MCF 10A (cell line): ENCODE measurements at regions of chr10 and their contacts with region 1.

Region 1: GRCh38 chr10:28241741-28242399 is 61.0 kb downstream of the MPP7 start:
- DNase-seq: peak; percentile 64
- H3K4me3 Mint-ChIP-seq: no peak overlapping the region
- H3K27ac Mint-ChIP-seq: no peak overlapping the region
- H3K4me1 Mint-ChIP-seq: peaks cover 5% of the 10 kb centered on the region
- H3K27me3 Mint-ChIP-seq: no peaks in the 10 kb centered on the region
- CTCF ChIP-seq: peak; percentile 75

Region 2: GRCh38 chr10:27369880-27370279 is 872.0 kb before region 1 on chr10:
- CTCF ChIA-PET with region 1: interaction called, 6 read pairs
- POLR2A ChIA-PET with region 1: no interaction called
- intact Hi-C with region 1: loop called (anchors 2 kb)
- DNase-seq: peak; percentile 24
- H3K4me3 Mint-ChIP-seq: no peak overlapping the region
- H3K27ac Mint-ChIP-seq: no peak overlapping the region
- H3K4me1 Mint-ChIP-seq: peaks cover 22% of the 10 kb centered on the region
- H3K27me3 Mint-ChIP-seq: no peaks in the 10 kb centered on the region
- CTCF ChIP-seq: peak; percentile 40

Region 3: DNA sequence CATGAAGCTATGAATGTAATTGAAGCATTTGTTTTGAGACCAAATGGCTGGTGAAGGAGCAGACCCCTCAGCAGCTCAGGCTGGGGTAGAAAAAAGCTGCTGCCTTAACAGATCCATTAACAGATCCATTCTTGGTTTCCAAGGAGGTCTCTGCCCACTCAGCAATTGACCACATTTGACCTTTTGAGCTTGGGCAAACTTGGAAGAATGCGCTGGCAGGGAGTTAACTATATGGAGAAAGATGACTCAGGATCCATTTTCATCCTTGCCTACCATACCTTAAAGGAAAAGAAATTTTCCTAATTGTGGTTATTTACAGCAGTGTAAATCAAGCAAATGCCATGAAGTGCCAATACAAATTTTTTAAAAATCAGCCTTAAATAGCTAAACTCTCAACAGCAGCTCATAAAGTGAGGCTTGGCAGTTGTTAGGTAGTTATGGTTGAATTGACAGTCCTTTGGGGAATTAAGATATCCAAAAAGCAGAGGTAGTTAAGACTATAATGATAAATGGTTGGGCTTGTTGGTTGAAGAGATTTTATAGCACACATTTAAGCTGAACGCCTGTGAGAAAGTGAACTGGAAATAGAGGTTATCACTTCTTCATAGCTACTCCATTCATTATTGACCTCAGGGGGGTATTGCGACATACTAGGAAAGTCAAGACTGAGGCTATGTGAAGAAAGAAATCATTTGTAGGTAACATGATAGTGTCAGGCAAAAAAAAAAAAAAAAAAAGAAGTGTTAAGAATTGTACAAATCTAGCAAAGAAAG is 580.2 kb before region 1 on chr10:
- CTCF ChIA-PET with region 1: interaction called, 4 read pairs
- POLR2A ChIA-PET with region 1: no interaction called
- intact Hi-C with region 1: loop called (anchors 5 kb)
- DNase-seq: peak; percentile 16
- H3K4me3 Mint-ChIP-seq: no peak overlapping the region
- H3K27ac Mint-ChIP-seq: no peak overlapping the region
- H3K4me1 Mint-ChIP-seq: peaks cover 14% of the 10 kb centered on the region
- H3K27me3 Mint-ChIP-seq: no peaks in the 10 kb centered on the region
- CTCF ChIP-seq: no peak

Region 4: GRCh38 chr10:27759483-27760272 is 482.2 kb before region 1 on chr10:
- CTCF ChIA-PET with region 1: interaction called, 3 read pairs
- POLR2A ChIA-PET with region 1: no interaction called
- intact Hi-C with region 1: loop called (anchors 5 kb)
- DNase-seq: peak; percentile 9
- H3K4me3 Mint-ChIP-seq: no peak overlapping the region
- H3K27ac Mint-ChIP-seq: no peak overlapping the region
- H3K4me1 Mint-ChIP-seq: no peaks in the 10 kb centered on the region
- H3K27me3 Mint-ChIP-seq: no peaks in the 10 kb centered on the region
- CTCF ChIP-seq: peak; percentile 18

Region 5: GRCh38 chr10:27783660-27784059 is 458.2 kb before region 1 on chr10:
- CTCF ChIA-PET with region 1: no interaction called
- POLR2A ChIA-PET with region 1: no interaction called
- intact Hi-C with region 1: loop called (anchors 2 kb)
- DNase-seq: peak; percentile 64
- H3K4me3 Mint-ChIP-seq: no peak overlapping the region
- H3K27ac Mint-ChIP-seq: no peak overlapping the region
- H3K4me1 Mint-ChIP-seq: no peaks in the 10 kb centered on the region
- H3K27me3 Mint-ChIP-seq: no peaks in the 10 kb centered on the region
- CTCF ChIP-seq: peak; percentile 29

Region 6: GRCh38 chr10:27865221-27865638 is 376.6 kb before region 1 on chr10:
- CTCF ChIA-PET with region 1: interaction called, 3 read pairs
- POLR2A ChIA-PET with region 1: no interaction called
- intact Hi-C with region 1: loop called (anchors 1 kb)
- DNase-seq: peak; percentile 44
- H3K4me3 Mint-ChIP-seq: no peak overlapping the region
- H3K27ac Mint-ChIP-seq: peak overlapping the region; percentile 40
- H3K4me1 Mint-ChIP-seq: peaks cover 15% of the 10 kb centered on the region
- H3K27me3 Mint-ChIP-seq: no peaks in the 10 kb centered on the region
- CTCF ChIP-seq: no peak

Region 7: DNA sequence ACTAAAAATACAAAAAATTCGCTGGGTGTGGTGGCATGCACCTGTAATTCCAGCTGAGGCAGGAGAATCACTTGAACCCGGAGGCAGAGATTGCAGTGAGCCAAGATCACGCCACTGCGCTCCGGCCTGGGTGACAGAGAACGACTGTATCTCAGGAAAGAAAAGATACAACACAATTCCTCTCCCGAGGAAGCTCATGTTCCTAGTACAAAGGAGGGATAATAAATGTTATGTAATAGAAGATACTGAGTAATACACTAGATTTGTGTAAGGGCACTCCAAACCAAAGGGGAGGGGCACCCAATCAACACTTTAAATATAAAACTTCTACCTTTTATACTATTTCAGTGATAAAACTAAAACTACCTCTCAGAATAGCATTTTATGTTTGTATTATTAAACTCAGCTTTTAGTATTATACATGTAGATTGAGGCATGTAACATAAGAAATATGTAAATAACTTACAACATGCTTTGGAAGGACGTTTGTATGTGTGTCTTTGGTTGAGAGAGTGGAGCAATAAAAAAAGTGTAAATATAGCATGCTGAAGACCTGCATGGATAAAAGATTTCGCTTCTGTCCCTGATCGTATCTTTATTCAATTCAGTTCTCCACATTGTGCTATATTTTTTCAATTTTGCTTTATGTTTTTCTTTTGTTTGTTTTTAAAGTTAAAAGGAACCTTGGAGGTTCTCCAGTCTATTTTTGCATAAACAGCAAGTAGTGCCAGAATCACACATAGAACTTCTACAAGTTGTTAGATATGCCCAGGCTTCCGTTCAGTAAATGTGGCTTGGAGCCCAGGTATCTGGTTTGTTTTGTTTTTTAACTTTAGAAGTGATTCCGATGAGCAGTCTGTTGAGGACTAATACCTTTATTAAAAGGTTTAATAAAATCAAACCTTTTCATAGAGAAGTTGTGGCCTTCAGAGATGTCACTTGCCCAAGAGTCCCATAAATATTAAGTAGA is 363.0 kb after region 1 on chr10:
- CTCF ChIA-PET with region 1: no interaction called
- POLR2A ChIA-PET with region 1: no interaction called
- intact Hi-C with region 1: no loop called
- DNase-seq: no peak
- H3K4me3 Mint-ChIP-seq: no peak overlapping the region
- H3K27ac Mint-ChIP-seq: no peak overlapping the region
- H3K4me1 Mint-ChIP-seq: peaks cover 18% of the 10 kb centered on the region
- H3K27me3 Mint-ChIP-seq: no peaks in the 10 kb centered on the region
- CTCF ChIP-seq: no peak

Region 8: DNA sequence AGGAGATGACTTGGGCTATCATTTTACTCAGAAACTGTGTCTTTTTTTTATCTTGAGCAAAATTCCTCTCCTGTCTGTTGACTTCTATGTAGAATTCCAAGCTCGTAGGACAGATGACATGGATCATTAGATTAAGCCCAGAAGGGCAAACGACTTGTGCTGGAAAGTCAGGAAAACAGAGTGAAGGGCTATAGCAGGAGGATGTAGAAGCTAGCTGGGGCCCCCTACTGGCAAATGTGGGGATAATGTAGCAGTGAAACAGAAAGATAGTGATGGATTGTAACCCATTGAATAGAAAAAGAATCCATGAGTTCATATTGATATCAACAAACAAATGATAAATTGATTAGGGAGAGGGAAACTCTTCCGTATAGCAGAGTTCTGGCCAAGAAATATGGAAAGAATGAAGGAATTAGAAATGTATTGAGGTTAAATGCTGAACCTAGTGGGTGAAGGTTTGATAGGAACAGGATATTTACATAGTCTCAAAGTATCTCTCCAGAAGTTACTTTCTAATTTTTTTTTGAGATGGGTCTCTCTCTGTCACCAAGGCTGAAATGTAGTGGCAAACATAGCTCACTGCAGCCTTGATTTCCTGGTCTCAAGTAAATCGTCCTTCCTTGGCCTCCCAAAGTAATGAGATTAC is 1150.6 kb after region 1 on chr10:
- CTCF ChIA-PET with region 1: no interaction called
- POLR2A ChIA-PET with region 1: no interaction called
- intact Hi-C with region 1: no loop called
- DNase-seq: peak; percentile 68
- H3K4me3 Mint-ChIP-seq: no peak overlapping the region
- H3K27ac Mint-ChIP-seq: no peak overlapping the region
- H3K4me1 Mint-ChIP-seq: no peaks in the 10 kb centered on the region
- H3K27me3 Mint-ChIP-seq: peaks cover 34% of the 10 kb centered on the region
- CTCF ChIP-seq: peak; percentile 48